GM12878 (cell line): ENCODE measurements at regions of chr6 and their contacts with region 1.

Region 1: GRCh38 chr6:100493227-100493911 is 28.6 kb upstream of the SIM1 start:
- DNase-seq: no peak
- ATAC-seq: peak; percentile 32; the same call in 1 of the 3 replicates
- H3K4me3 ChIP-seq: no peak overlapping the region
- H3K27ac ChIP-seq: no peak overlapping the region
- H3K4me1 ChIP-seq: no peaks in the 10 kb centered on the region
- H3K27me3 ChIP-seq: no peaks in the 10 kb centered on the region; a peak in 1 of 4 replicates
- CTCF ChIP-seq: no peak
- EP300 ChIP-seq: no peak
- POLR2A ChIP-seq: no peak
- RAD21 ChIP-seq: no peak

Region 2: DNA sequence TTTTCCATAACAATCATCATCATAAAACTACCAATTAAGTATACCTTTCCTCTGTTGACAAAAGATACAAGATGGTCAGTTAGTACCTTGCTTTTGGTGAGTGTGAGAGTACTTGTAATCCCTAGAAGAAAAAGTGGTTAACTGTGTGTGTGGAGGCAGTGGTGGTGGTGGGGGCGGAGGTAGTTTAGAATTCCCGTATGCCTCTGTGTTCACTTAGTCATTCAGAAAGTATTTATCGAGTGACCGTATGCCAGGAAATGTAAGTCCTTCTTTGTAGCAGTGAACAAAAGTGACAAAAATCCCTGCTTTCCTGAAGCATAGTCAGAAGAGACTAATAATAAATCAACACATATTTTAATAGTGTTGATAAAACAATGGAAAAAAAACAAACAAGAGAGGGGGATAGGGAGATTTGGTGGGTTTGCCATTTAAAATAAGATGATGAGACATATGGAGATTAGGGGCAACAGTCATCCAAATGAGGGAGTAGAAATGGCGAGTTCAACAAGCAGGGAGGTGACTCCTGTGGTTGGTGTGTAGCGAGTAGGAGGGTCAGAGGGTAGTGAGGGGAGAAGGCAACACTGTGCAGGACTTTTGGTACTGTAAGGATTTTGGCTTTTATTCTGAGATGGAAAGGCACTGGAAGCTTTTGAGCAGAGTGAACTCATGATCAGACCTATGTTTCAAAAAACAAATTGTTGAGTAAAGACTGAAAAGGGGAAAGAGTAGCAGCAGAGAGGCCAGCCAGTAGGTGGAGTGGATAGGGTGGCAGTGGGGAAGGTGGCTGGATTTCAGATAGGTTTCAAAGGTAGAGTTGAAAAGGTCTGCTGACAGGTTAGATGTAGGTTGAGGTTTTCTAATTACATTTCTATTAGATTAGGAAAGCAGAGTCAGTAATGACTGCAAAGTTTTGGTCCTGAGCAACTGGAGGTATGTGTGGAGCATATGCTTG is 11.7 kb after region 1 on chr6:
- CTCF ChIA-PET with region 1: interaction called, 3 read pairs
- POLR2A ChIA-PET with region 1: no interaction called
- RAD21 ChIA-PET with region 1: no interaction called
- SMC1A ChIA-PET with region 1: interaction called, 11 read pairs
- in situ Hi-C with region 1: no loop called
- intact Hi-C with region 1: no loop called
- DNase-seq: no peak
- ATAC-seq: peak; percentile 50
- H3K4me3 ChIP-seq: no peak overlapping the region
- H3K27ac ChIP-seq: no peak overlapping the region
- H3K4me1 ChIP-seq: no peaks in the 10 kb centered on the region
- H3K27me3 ChIP-seq: no peaks in the 10 kb centered on the region
- CTCF ChIP-seq: no peak
- EP300 ChIP-seq: no peak
- POLR2A ChIP-seq: no peak
- RAD21 ChIP-seq: no peak

Region 3: DNA sequence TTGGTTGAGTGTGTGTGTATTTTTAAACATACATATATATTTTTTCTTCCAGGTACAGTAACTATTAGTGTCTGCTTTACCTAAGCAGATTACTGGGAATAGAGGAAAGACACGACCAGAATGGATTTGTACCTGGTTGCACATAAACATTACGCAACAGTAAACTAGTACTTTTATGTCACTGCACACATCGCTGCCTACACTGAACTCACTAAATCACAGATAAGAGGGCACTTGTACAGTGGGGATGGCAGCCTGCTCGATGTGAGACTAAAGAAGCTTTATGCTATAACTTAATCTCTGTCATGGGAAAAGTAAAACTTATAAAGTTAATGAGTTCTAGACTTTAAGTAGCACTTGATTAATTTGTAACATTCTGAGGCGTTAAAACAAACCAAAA is 60.9 kb after region 1 on chr6:
- CTCF ChIA-PET with region 1: no interaction called
- POLR2A ChIA-PET with region 1: no interaction called
- RAD21 ChIA-PET with region 1: no interaction called
- SMC1A ChIA-PET with region 1: no interaction called
- in situ Hi-C with region 1: no loop called
- intact Hi-C with region 1: no loop called
- DNase-seq: no peak
- ATAC-seq: no peak
- H3K4me3 ChIP-seq: no peak overlapping the region
- H3K27ac ChIP-seq: no peak overlapping the region
- H3K4me1 ChIP-seq: no peaks in the 10 kb centered on the region
- H3K27me3 ChIP-seq: no peaks in the 10 kb centered on the region
- CTCF ChIP-seq: no peak
- EP300 ChIP-seq: no peak
- POLR2A ChIP-seq: no peak
- RAD21 ChIP-seq: no peak